ENCODE measurements at regions of chr12 and their contacts with region 1.

Region 1: GRCh38 chr12:3885277-3886094 is 12.3 kb upstream of the PARP11 start:
- DNase-seq: peak in 23 of 35 experiments; percentile 11 to 81 (median 34)
- ATAC-seq: peak in 2 of 4 experiments; percentile 27 to 42
- H3K4me3 ChIP-seq: no peak overlapping the region
- H3K4me3 Mint-ChIP-seq: peak overlapping the region in 1 of 3 donors; percentile 2
- H3K27ac ChIP-seq: no peak overlapping the region
- H3K27ac Mint-ChIP-seq: peak overlapping the region; percentile 7 to 35
- H3K4me1 ChIP-seq: peaks cover 3 to 6% of the 10 kb centered on the region in 2 experiments
- H3K4me1 Mint-ChIP-seq: peaks cover 7 to 15% (median 11%) of the 10 kb centered on the region in 3 donors
- H3K27me3 ChIP-seq: no peaks in the 10 kb centered on the region
- H3K27me3 Mint-ChIP-seq: peaks cover 4% of the 10 kb centered on the region in 2 donors

Region 2: GRCh38 chr12:3365463-3366411 is 519.7 kb before region 1 on chr12:
- CTCF ChIA-PET with region 1: no interaction called
- POLR2A ChIA-PET with region 1: no interaction called
- DNase-seq: no peak
- ATAC-seq: no peak
- H3K4me3 ChIP-seq: no peak overlapping the region
- H3K4me3 Mint-ChIP-seq: no peak overlapping the region
- H3K27ac ChIP-seq: no peak overlapping the region
- H3K27ac Mint-ChIP-seq: no peak overlapping the region
- H3K4me1 ChIP-seq: no peaks in the 10 kb centered on the region
- H3K4me1 Mint-ChIP-seq: peaks cover 2 to 6% (median 3%) of the 10 kb centered on the region in 3 donors
- H3K27me3 ChIP-seq: peaks cover 6 to 56% of the 10 kb centered on the region in 2 experiments
- H3K27me3 Mint-ChIP-seq: peaks cover 21 to 23% of the 10 kb centered on the region in 2 donors

Region 3: GRCh38 chr12:3896801-3897331 is 11.4 kb after region 1 on chr12:
- CTCF ChIA-PET with region 1: interaction called in 1 of 2 experiments, 29 read pairs
- POLR2A ChIA-PET with region 1: no interaction called
- DNase-seq: peak in 2 of 35 experiments; percentile 10 to 25
- ATAC-seq: peak; percentile 31 to 41 (median 36)
- H3K4me3 ChIP-seq: peak overlapping the region in 1 of 2 donors; percentile 38
- H3K4me3 Mint-ChIP-seq: peak overlapping the region; percentile 59 to 66 (median 61)
- H3K27ac ChIP-seq: peak overlapping the region; percentile 84
- H3K27ac Mint-ChIP-seq: no peak overlapping the region
- H3K4me1 ChIP-seq: peaks cover 57 to 82% of the 10 kb centered on the region in 2 experiments
- H3K4me1 Mint-ChIP-seq: peaks cover 47 to 50% (median 48%) of the 10 kb centered on the region in 3 donors
- H3K27me3 ChIP-seq: no peaks in the 10 kb centered on the region
- H3K27me3 Mint-ChIP-seq: no peaks in the 10 kb centered on the region

Region 4: GRCh38 chr12:3964439-3964838 is 79.0 kb after region 1 on chr12:
- CTCF ChIA-PET with region 1: interaction called, 45 to 65 read pairs
- POLR2A ChIA-PET with region 1: interaction called, 4 to 8 read pairs
- DNase-seq: no peak
- ATAC-seq: no peak
- H3K4me3 ChIP-seq: no peak overlapping the region
- H3K4me3 Mint-ChIP-seq: no peak overlapping the region
- H3K27ac ChIP-seq: no peak overlapping the region
- H3K27ac Mint-ChIP-seq: peak overlapping the region; percentile 31 to 49
- H3K4me1 ChIP-seq: peaks cover 18 to 26% of the 10 kb centered on the region in 2 experiments
- H3K4me1 Mint-ChIP-seq: peaks cover 24 to 30% (median 29%) of the 10 kb centered on the region in 3 donors
- H3K27me3 ChIP-seq: peaks cover 0 to 5% of the 10 kb centered on the region in 2 experiments
- H3K27me3 Mint-ChIP-seq: no peaks in the 10 kb centered on the region

Region 5: GRCh38 chr12:4015232-4016091 is 130.0 kb after region 1 on chr12:
- CTCF ChIA-PET with region 1: no interaction called
- POLR2A ChIA-PET with region 1: no interaction called
- DNase-seq: no peak
- ATAC-seq: no peak
- H3K4me3 ChIP-seq: no peak overlapping the region
- H3K4me3 Mint-ChIP-seq: no peak overlapping the region
- H3K27ac ChIP-seq: no peak overlapping the region
- H3K27ac Mint-ChIP-seq: no peak overlapping the region
- H3K4me1 ChIP-seq: no peaks in the 10 kb centered on the region
- H3K4me1 Mint-ChIP-seq: peaks cover 0 to 4% (median 0%) of the 10 kb centered on the region in 3 donors
- H3K27me3 ChIP-seq: no peaks in the 10 kb centered on the region
- H3K27me3 Mint-ChIP-seq: no peaks in the 10 kb centered on the region

Region 6: DNA sequence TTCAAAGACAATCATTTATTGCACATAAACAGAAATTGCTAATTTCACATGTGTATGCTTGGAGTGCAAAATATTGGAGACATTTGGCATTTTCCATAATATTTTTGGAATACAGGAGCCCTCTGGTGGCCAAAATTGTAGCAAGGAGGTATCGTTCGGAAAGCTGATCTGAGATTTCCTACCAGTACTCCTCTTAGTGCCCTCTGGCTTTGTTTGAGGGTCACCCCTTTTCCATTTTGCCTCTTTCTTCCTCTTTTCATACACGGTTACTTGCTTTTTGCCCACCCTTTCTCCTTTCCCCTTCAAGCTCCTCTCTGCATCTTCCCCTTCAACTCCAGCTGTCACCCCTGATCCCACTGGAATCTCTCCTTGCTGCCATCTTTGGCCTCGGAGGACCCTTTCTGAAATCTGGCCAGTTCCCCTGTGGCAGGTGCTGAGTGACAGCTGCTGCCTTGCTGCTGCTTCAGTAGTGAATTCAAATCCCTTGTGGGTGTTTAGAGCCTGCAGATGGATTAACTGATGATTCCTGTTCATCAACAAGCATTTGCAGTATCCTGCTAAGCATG is 152.3 kb after region 1 on chr12:
- CTCF ChIA-PET with region 1: interaction called, 11 to 38 read pairs
- POLR2A ChIA-PET with region 1: interaction called in 1 of 2 experiments, 6 read pairs
- DNase-seq: peak in 4 of 35 experiments; percentile 8 to 43 (median 24)
- ATAC-seq: no peak
- H3K4me3 ChIP-seq: no peak overlapping the region
- H3K4me3 Mint-ChIP-seq: no peak overlapping the region
- H3K27ac ChIP-seq: no peak overlapping the region
- H3K27ac Mint-ChIP-seq: no peak overlapping the region
- H3K4me1 ChIP-seq: no peaks in the 10 kb centered on the region
- H3K4me1 Mint-ChIP-seq: peaks cover 0 to 13% (median 2%) of the 10 kb centered on the region in 3 donors
- H3K27me3 ChIP-seq: no peaks in the 10 kb centered on the region
- H3K27me3 Mint-ChIP-seq: no peaks in the 10 kb centered on the region

Region 7: DNA sequence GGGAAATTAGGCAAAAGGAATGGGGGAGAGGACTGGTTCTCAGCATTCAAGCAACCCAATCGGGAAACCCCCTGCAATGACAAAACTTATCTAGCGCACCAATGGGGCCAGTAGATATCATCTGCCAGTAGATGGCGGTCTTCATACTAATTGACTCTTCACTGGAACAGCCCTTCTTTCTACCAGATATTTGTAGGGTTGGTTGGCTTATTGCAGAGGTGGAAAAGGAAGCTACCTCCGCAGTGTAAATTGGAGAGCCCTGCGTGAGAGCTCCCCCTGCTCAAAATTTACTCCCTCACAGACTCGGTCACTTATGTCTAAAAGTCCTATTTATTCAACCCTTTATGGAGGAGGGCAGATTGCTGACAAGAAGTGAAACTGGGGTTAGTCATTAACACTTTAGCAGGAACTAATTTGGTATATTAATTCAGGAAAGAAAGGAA is 222.0 kb after region 1 on chr12:
- CTCF ChIA-PET with region 1: interaction called in 1 of 2 experiments, 13 read pairs
- POLR2A ChIA-PET with region 1: interaction called in 1 of 2 experiments, 5 read pairs
- DNase-seq: peak; percentile 29 to 91 (median 70)
- ATAC-seq: peak; percentile 96 to 100 (median 97)
- H3K4me3 ChIP-seq: no peak overlapping the region
- H3K4me3 Mint-ChIP-seq: peak overlapping the region in 2 of 3 donors; percentile 28 to 45
- H3K27ac ChIP-seq: peak overlapping the region; percentile 65
- H3K27ac Mint-ChIP-seq: peak overlapping the region; percentile 71 to 79
- H3K4me1 ChIP-seq: peaks cover 7 to 12% of the 10 kb centered on the region in 2 experiments
- H3K4me1 Mint-ChIP-seq: peaks cover 14 to 21% (median 16%) of the 10 kb centered on the region in 3 donors
- H3K27me3 ChIP-seq: no peaks in the 10 kb centered on the region
- H3K27me3 Mint-ChIP-seq: no peaks in the 10 kb centered on the region